Activated CD4-positive, alpha-beta T cell treated with anti-CD3 and anti-CD28 coated beads for 36 hours (primary cell): ENCODE measurements at regions of chr15 and their contacts with region 1.

Region 1: DNA sequence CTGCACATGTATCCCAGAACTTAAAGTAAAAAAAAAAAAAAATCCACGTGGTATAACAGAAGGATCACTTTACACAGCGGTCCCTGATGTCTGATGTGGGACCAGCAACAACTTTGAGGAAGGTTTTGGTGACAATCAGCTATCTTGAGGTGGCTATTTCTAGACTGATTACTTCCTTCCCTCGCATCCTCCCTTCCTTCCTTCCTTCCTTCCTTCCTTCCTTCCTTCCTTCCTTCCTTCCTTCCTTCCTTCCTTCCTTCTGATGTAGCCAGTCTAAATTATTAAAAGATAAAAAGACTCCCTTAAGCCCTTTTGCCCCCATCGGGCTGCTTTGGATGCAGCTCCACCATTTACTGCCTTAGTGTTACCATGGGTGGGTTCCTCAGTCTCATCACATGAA is 14.9 kb downstream of the SORD start:
- DNase-seq: no peak
- ATAC-seq: no peak
- H3K4me3 Mint-ChIP-seq: no peak overlapping the region
- H3K27ac Mint-ChIP-seq: no peak overlapping the region
- H3K4me1 Mint-ChIP-seq: peaks cover 14% of the 10 kb centered on the region
- H3K27me3 Mint-ChIP-seq: no peaks in the 10 kb centered on the region

Region 2: GRCh38 chr15:44584162-44584749 is 453.7 kb before region 1 on chr15:
- CTCF ChIA-PET with region 1: no interaction called
- POLR2A ChIA-PET with region 1: no interaction called
- intact Hi-C with region 1: loop called in 1 of 2 experiments (anchors 2 kb)
- DNase-seq: peak; percentile 81
- ATAC-seq: peak; percentile 97
- H3K4me3 Mint-ChIP-seq: no peak overlapping the region
- H3K27ac Mint-ChIP-seq: no peak overlapping the region
- H3K4me1 Mint-ChIP-seq: peaks cover 6% of the 10 kb centered on the region
- H3K27me3 Mint-ChIP-seq: no peaks in the 10 kb centered on the region

Region 3: GRCh38 chr15:44971036-44971435 is 66.9 kb before region 1 on chr15:
- CTCF ChIA-PET with region 1: interaction called, 4 read pairs
- POLR2A ChIA-PET with region 1: no interaction called
- intact Hi-C with region 1: loop called (anchors 2 to 5 kb)
- DNase-seq: no peak
- ATAC-seq: no peak
- H3K4me3 Mint-ChIP-seq: no peak overlapping the region
- H3K27ac Mint-ChIP-seq: no peak overlapping the region
- H3K4me1 Mint-ChIP-seq: no peaks in the 10 kb centered on the region
- H3K27me3 Mint-ChIP-seq: no peaks in the 10 kb centered on the region

Region 4: GRCh38 chr15:45126535-45127158 is 88.7 kb after region 1 on chr15:
- CTCF ChIA-PET with region 1: no interaction called
- POLR2A ChIA-PET with region 1: no interaction called
- intact Hi-C with region 1: no loop called
- DNase-seq: peak; percentile 51
- ATAC-seq: peak; percentile 50
- H3K4me3 Mint-ChIP-seq: no peak overlapping the region
- H3K27ac Mint-ChIP-seq: no peak overlapping the region
- H3K4me1 Mint-ChIP-seq: no peaks in the 10 kb centered on the region
- H3K27me3 Mint-ChIP-seq: peaks cover 43% of the 10 kb centered on the region